ENCODE measurements at regions of chr16 and their contacts with region 1.

Region 1: GRCh38 chr16:51151961-51152663 is 1.0 kb upstream of the SALL1 start:
- DNase-seq: peak; percentile 77 to 91
- H3K4me3 ChIP-seq: peak overlapping the region; percentile 76 to 100 (median 84)
- H3K27ac ChIP-seq: peak overlapping the region; percentile 75; the same call in 1 of the 2 replicates
- H3K4me1 ChIP-seq: peaks cover 8 to 29% (median 14%) of the 10 kb centered on the region in 4 experiments; a peak in 6 of 7 replicates
- H3K27me3 ChIP-seq: peaks cover 3 to 25% (median 13%) of the 10 kb centered on the region in 4 experiments; a peak in 6 of 7 replicates
- CTCF ChIP-seq: peak in 1 of 3 experiments; percentile 1; a peak in 2 of 4 replicates
- EP300 ChIP-seq: no peak; a peak in 1 of 3 replicates
- POLR2A ChIP-seq: no peak
- RAD21 ChIP-seq: peak; percentile 37 to 42

Region 2: DNA sequence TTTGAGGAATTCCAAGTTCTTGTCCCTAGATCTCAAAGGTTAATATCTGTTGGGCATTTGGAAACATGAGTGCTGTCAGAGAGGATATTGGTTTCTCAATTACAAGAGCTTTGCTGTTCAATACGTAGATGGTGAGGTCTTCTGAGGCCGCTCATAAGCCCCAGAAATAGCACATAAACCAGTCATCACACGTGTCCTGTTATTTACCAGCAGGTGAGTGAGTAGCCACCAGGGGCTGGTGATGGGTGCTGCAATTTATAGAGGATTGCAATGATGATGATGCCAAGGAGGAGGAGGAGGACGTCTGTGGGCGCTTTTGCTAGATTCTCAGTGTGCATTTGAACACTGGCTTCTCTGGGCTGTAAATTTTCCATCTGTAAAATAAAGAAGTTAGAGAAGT is 90.1 kb before region 1 on chr16:
- CTCF ChIA-PET with region 1: no interaction called
- POLR2A ChIA-PET with region 1: no interaction called
- DNase-seq: no peak
- H3K4me3 ChIP-seq: no peak overlapping the region
- H3K27ac ChIP-seq: no peak overlapping the region
- H3K4me1 ChIP-seq: peaks cover 0 to 2% (median 0%) of the 10 kb centered on the region in 4 experiments; a peak in 2 of 7 replicates
- H3K27me3 ChIP-seq: no peaks in the 10 kb centered on the region
- CTCF ChIP-seq: peak in 1 of 3 experiments; percentile 5; a peak in 1 of 4 replicates
- EP300 ChIP-seq: no peak
- POLR2A ChIP-seq: no peak
- RAD21 ChIP-seq: no peak

Region 3: DNA sequence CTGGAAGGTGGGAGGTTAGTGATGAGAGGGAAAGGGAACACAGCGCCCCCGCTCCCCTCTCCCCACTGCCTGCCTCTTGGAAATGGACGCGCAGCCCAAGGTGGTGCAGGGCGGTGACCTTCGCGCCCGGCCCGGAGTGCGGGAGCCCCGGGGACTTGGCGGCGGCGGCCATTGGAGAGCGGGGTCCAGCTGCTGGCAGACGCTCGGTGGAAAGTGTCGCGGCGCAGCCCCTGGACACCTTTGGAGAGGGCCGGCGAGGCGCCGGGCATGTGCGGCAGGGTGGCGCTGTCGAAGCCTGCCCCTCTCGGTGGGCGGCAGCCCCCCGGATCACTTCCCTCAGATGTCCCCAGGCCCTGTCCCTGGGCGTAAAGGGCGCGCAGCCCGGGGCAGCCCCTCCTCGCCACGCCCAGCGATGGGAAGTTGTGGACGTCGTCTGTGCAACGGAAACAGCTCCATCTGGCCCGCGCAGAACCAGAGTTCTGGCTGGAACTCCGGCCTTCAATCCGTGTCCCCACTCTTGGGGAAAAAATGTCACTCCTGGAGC is 17.8 kb before region 1 on chr16:
- CTCF ChIA-PET with region 1: interaction called, 3 read pairs
- POLR2A ChIA-PET with region 1: interaction called, 28 read pairs
- DNase-seq: peak in 1 of 2 experiments; percentile 77
- H3K4me3 ChIP-seq: peak overlapping the region; percentile 58 to 70 (median 66)
- H3K27ac ChIP-seq: no peak overlapping the region
- H3K4me1 ChIP-seq: peaks cover 1 to 5% (median 2%) of the 10 kb centered on the region in 4 experiments; a peak in 4 of 7 replicates
- H3K27me3 ChIP-seq: no peaks in the 10 kb centered on the region
- CTCF ChIP-seq: no peak
- EP300 ChIP-seq: no peak
- POLR2A ChIP-seq: peak in 1 of 2 experiments; percentile 48; a peak in 1 of 3 replicates
- RAD21 ChIP-seq: no peak

Region 4: DNA sequence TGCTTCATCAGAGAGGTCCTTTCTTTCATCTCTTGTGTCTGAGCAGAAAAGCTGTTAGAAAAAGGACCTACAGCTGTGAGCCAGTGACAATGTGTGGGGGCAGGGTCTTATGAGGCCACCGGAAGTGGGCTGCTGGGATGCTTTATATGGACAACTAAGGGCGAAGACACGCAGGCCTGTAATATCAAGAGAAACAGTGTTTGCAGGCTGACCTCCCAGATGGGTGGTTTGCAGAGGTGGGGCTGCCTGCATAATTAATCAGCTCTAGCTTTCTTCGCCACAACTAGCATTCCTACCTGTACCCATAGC is 29.3 kb after region 1 on chr16:
- CTCF ChIA-PET with region 1: interaction called, 4 read pairs
- POLR2A ChIA-PET with region 1: interaction called, 33 read pairs
- DNase-seq: peak; percentile 62
- H3K4me3 ChIP-seq: peak overlapping the region in 1 of 4 experiments; percentile 39; a peak in 4 of 8 replicates
- H3K27ac ChIP-seq: peak overlapping the region; percentile 60; the same call in 1 of the 2 replicates
- H3K4me1 ChIP-seq: peaks cover 12 to 37% (median 23%) of the 10 kb centered on the region in 4 experiments; a peak in 6 of 7 replicates
- H3K27me3 ChIP-seq: no peaks in the 10 kb centered on the region
- CTCF ChIP-seq: no peak
- EP300 ChIP-seq: no peak; a peak in 1 of 3 replicates
- POLR2A ChIP-seq: peak in 1 of 2 experiments; percentile 23; a peak in 1 of 3 replicates
- RAD21 ChIP-seq: no peak

Region 5: GRCh38 chr16:51392521-51393187 is 240.5 kb after region 1 on chr16:
- CTCF ChIA-PET with region 1: interaction called, 5 read pairs
- POLR2A ChIA-PET with region 1: interaction called, 12 read pairs
- DNase-seq: peak in 1 of 2 experiments; percentile 54
- H3K4me3 ChIP-seq: peak overlapping the region in 2 of 4 experiments; percentile 19 to 44; a peak in 5 of 8 replicates
- H3K27ac ChIP-seq: peak overlapping the region; percentile 45
- H3K4me1 ChIP-seq: peaks cover 2 to 18% (median 13%) of the 10 kb centered on the region in 4 experiments; a peak in 5 of 7 replicates
- H3K27me3 ChIP-seq: no peaks in the 10 kb centered on the region
- CTCF ChIP-seq: no peak
- EP300 ChIP-seq: no peak
- POLR2A ChIP-seq: no peak
- RAD21 ChIP-seq: no peak

Measured in H1 (cell line).